OCI-LY7 (cell line): ENCODE measurements at regions of chr5 and their contacts with region 1.

Region 1: DNA sequence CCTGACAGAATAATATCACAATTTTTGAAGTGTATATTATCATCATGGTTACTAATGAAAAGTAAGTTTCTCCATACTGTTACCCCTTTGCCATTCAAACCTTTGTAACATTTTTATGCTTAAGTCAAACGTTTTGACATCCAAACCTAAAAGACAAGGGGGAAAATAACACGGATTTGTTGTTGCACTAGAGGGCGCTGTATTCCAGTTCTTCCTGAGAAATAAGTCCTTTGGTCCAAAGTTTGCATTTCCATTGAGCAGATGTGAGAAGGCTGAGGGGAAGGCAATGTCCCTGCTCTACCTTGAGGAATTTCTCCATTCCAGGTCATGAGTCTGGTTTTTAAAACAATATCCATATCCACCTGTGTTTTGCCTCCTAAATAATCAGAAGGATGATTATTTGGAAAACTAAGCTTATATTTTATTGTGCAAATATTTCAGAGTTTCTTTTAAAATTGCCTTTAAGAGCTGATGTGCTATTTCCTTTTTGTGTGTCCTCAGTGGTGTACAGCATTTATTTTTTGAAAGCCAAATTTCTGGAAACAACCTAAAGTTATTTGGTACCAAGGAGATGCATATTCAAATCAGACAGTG is 9.7 kb downstream of the LECT2 start:
- DNase-seq: peak; percentile 84
- H3K4me3 ChIP-seq: no peak overlapping the region
- H3K27ac ChIP-seq: no peak overlapping the region
- H3K4me1 ChIP-seq: no peaks in the 10 kb centered on the region
- CTCF ChIP-seq: peak; percentile 95

Region 2: DNA sequence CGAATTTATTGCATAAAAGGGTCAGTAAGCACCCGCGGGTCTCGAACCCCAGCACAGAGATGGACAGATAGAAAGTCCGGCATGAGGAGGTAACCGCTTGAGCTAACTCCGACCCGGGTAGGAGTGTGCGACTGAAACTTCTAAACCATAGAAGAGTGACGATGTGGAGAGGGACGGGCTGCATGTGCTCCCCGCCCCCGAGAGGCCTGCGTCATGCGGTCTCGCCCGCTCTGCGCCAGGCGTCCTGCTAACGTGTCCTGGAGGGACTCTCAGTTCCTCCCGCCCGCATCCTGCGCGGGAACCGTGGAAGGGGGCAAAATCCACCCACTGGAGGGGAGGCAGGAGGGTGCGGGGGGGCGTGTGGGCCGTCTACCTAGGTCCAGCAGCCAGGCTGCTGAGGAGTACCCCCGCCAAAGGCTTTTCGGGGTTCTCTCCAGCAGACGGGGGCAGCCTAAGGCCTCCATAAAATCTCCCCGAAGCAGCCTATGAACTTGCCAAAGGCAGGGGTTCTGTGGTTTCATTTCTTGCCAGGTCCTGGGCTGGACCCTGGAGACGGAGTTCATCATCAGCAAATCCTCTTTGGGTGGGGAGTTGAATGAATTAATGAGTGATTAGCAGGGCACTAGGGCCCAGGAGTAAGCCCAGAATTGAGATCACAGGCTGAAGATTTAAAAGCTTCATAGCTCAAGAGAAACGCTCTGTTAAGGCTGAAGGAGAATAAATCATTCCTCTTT is 135.6 kb after region 1 on chr5:
- CTCF ChIA-PET with region 1: no interaction called
- POLR2A ChIA-PET with region 1: no interaction called
- intact Hi-C with region 1: loop called (anchors 1 kb)
- DNase-seq: no peak
- H3K4me3 ChIP-seq: no peak overlapping the region
- H3K27ac ChIP-seq: no peak overlapping the region
- H3K4me1 ChIP-seq: peaks cover 3% of the 10 kb centered on the region
- CTCF ChIP-seq: no peak

Region 3: GRCh38 chr5:136212252-136212721 is 267.2 kb after region 1 on chr5:
- CTCF ChIA-PET with region 1: no interaction called
- POLR2A ChIA-PET with region 1: no interaction called
- intact Hi-C with region 1: loop called (anchors 2 kb)
- DNase-seq: peak; percentile 57
- H3K4me3 ChIP-seq: no peak overlapping the region
- H3K27ac ChIP-seq: no peak overlapping the region
- H3K4me1 ChIP-seq: no peaks in the 10 kb centered on the region
- CTCF ChIP-seq: peak; percentile 98